ENCODE measurements at regions of chr16 and their contacts with region 1.

Region 1: DNA sequence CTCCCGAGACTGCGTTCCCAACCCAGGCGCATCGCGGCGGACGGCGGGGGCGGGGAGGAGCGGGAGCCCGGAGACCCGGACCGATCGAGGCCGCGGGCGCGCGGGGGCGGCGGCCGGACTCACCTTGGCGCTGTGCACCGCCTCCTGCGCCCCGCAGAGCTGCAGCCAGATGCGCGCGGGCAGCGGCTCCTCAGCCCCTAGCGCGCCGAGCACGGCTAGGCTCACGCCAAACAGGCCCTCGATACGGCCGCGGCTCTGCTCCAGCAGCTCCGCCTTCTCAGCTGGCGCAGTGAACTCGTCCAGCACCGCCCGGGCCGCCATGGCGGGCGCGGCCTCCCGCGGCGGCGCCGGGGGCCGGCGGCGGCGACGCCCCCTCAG is 339 bp downstream of the N4BP1 start:
- DNase-seq: no peak
- ATAC-seq: peak; percentile 74
- H3K4me3 ChIP-seq: peak overlapping the region; percentile 95 to 97
- H3K27ac ChIP-seq: peak overlapping the region; percentile 95
- H3K4me1 ChIP-seq: peaks cover 14 to 29% of the 10 kb centered on the region in 2 experiments
- H3K27me3 ChIP-seq: no peaks in the 10 kb centered on the region
- CTCF ChIP-seq: no peak
- POLR2A ChIP-seq: no peak
- RAD21 ChIP-seq: no peak

Region 2: DNA sequence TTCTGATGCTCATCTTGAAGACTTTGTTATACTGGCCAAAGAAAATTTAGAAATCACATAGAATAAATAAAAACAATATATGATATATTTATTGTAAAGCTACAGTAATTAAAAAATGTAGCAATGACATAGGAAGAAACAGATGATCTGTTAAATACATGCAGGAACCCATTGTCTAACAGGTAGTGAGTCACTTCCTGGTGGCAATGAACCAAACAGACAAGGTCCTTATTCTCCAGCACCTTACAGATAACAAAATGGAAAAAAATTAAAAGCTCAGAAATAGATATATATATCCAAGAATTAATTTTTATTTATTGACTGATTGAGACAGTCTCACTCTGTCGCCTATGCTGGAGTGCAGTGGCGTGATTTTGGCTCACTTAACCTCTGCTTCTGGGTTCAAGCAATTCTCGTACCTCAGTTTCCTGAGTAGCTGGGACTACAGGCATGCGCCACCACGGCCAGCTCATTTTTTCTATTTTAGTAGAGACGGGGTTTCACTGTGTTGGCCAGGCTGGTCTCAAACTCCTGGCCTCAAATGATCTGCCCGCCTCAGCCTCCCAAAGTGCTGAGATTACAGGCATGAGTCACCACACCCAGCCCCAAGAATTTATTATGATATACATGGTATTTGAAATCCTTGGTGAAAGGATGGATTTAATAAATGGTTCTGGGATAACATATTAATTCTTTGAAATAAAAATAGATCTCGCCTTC is 1473.4 kb before region 1 on chr16:
- CTCF ChIA-PET with region 1: no interaction called
- POLR2A ChIA-PET with region 1: no interaction called
- RAD21 ChIA-PET with region 1: no interaction called
- intact Hi-C with region 1: loop called (anchors 5 kb)
- DNase-seq: peak; percentile 21
- ATAC-seq: peak; percentile 37
- H3K4me3 ChIP-seq: no peak overlapping the region
- H3K27ac ChIP-seq: no peak overlapping the region
- H3K4me1 ChIP-seq: peaks cover 17 to 42% of the 10 kb centered on the region in 2 experiments; a peak in 3 of 4 replicates
- H3K27me3 ChIP-seq: no peaks in the 10 kb centered on the region
- CTCF ChIP-seq: no peak
- POLR2A ChIP-seq: no peak
- RAD21 ChIP-seq: no peak

Region 3: DNA sequence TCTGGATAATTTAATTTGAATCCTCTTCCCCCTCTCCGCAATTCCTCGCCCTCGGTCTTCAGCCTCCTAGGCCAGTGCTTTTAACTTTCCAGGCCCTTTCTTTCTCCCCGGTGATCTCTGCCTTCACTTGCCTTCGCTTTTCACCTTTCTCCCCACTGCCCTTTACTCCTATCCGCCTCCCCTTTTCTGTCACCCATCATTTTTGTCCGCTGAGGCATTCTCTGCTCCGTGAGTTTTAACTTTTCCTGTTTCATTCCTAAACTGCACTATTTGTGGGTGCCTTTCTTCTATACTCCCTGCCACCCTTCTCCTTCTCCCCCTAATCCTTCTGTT is 364.8 kb before region 1 on chr16:
- CTCF ChIA-PET with region 1: no interaction called
- POLR2A ChIA-PET with region 1: no interaction called
- RAD21 ChIA-PET with region 1: no interaction called
- intact Hi-C with region 1: loop called (anchors 5 kb)
- DNase-seq: no peak
- ATAC-seq: no peak
- H3K4me3 ChIP-seq: peak overlapping the region; percentile 89 to 94
- H3K27ac ChIP-seq: peak overlapping the region; percentile 93
- H3K4me1 ChIP-seq: peaks cover 15 to 20% of the 10 kb centered on the region in 2 experiments
- H3K27me3 ChIP-seq: no peaks in the 10 kb centered on the region
- CTCF ChIP-seq: no peak
- POLR2A ChIP-seq: no peak
- RAD21 ChIP-seq: no peak